ENCODE measurements at regions of chr17 and their contacts with region 1.

Region 1: DNA sequence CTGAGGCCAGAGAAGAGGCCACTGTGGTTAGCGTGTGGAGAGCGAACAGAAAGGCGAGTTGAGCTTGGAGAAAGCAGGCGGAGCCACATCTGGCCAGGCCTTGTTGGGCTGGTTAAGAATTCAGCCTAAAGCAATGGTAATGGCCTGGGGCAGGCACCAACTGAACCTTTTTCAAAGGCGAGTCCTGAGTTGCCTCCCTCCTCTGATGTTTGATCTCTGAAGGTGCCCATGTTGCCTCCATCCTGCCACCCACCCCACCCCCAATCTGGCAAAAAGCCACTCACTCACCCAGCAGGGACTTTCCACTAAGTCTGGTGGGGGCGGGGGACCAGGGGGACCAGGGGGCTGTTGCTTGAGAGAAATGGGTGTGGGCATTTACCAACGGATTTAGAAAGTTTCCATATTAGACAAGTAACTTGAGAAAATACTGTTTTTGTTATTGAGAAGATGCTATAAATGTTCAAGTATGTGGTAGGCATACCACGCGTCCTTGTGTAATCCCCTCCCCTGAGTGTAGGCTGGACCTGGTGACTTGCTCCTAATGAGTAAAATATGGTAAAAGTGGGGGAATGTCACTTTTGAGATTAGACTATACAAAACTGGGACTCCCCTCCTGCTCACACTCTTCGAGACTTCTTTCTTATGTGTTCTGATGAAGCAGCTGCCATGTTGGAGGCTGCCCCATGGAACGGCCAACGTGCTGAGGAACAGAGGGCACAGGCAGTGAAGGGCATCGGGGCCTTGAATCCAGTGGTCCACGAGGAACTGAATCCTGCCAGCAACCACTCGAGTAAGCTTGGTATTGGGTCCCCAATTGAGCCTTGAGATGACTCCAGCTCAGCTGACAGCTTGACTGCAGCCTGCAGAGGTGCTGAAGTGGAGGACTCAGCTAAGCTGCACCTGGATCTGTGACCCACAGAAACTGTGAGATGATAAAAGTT is 29.9 kb upstream of the TNS4 start:
- DNase-seq: no peak
- H3K4me3 ChIP-seq: no peak overlapping the region
- H3K27ac ChIP-seq: no peak overlapping the region
- H3K27me3 ChIP-seq: no peaks in the 10 kb centered on the region
- CTCF ChIP-seq: no peak

Region 2: GRCh38 chr17:40382251-40382650 is 149.1 kb before region 1 on chr17:
- CTCF ChIA-PET with region 1: interaction called, 12 read pairs
- POLR2A ChIA-PET with region 1: no interaction called
- DNase-seq: no peak
- H3K4me3 ChIP-seq: no peak overlapping the region
- H3K27ac ChIP-seq: no peak overlapping the region
- H3K27me3 ChIP-seq: no peaks in the 10 kb centered on the region
- CTCF ChIP-seq: no peak

Region 3: GRCh38 chr17:40443583-40444327 is 87.6 kb before region 1 on chr17:
- CTCF ChIA-PET with region 1: interaction called, 50 read pairs
- POLR2A ChIA-PET with region 1: interaction called, 15 read pairs
- DNase-seq: no peak
- H3K4me3 ChIP-seq: peak overlapping the region; percentile 98
- H3K27ac ChIP-seq: peak overlapping the region; percentile 39
- H3K27me3 ChIP-seq: no peaks in the 10 kb centered on the region
- CTCF ChIP-seq: peak; percentile 48

Region 4: DNA sequence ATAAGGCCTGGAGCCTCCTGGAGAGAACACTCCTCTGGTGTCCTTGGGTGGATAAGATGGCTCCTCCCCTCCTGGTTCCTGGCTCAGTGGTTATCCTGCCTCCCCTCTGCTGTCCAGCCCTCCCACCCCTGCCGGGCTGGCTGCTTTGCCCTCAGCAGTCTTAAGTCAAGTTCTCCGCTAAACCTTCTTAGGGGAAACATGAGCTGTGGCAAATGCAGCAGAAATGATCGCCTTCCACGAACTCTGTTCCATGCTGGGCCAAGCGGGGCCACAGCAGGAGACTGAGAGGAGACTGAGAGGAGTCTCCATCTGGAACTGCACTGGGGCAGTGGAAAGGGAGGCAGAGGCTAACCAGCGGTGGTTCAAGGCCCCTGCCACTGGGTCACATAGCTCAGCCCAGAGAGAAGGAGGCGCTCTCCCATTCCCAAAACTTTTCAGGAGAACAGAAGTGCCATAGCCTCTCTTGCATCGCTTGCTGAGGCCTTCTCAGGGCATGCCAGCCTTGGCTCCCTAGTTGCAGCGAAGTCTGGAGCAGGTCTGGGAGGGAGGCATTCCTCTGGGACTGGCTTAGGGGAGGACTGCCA is 56.8 kb before region 1 on chr17:
- CTCF ChIA-PET with region 1: interaction called, 94 read pairs
- POLR2A ChIA-PET with region 1: interaction called, 133 read pairs
- DNase-seq: no peak
- H3K4me3 ChIP-seq: no peak overlapping the region
- H3K27ac ChIP-seq: no peak overlapping the region
- H3K27me3 ChIP-seq: no peaks in the 10 kb centered on the region
- CTCF ChIP-seq: no peak

Region 5: DNA sequence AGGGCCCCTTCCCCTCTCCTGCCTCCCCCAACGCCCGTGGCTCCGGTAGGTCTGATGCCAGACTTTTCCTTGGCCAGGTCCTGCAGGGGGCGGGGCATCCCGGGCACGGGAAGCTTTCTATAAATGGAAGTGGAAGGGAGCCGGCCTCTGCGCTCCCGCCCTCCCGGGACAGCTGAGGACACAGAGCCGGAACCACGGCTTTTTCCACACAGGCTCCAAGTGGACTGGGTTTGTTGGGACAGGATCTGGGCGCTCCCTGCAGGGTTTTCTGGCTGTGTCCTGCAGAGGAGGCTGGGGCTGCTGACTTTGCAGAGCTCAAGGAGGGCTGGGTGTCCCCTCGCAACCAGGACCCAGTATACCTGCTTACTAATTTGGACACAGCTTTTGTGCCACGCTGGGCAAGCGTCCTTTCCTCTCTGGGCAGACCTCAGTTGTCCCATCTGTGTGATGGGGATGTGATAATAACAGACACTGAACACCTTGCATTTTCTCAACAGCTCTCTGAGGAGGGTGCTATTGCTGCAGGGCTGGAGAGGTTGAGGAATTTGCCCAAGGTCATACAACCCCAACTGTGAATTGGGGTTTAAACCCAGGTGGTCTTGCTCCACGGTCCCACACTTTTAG is 31.7 kb before region 1 on chr17:
- CTCF ChIA-PET with region 1: interaction called, 3 read pairs
- POLR2A ChIA-PET with region 1: interaction called, 11 read pairs
- DNase-seq: no peak
- H3K4me3 ChIP-seq: no peak overlapping the region
- H3K27ac ChIP-seq: no peak overlapping the region
- H3K27me3 ChIP-seq: no peaks in the 10 kb centered on the region
- CTCF ChIP-seq: no peak

Measured in AG04450 (cell line).